HCT116 (cell line): ENCODE measurements at regions of chr3 and their contacts with region 1.

Region 1: DNA sequence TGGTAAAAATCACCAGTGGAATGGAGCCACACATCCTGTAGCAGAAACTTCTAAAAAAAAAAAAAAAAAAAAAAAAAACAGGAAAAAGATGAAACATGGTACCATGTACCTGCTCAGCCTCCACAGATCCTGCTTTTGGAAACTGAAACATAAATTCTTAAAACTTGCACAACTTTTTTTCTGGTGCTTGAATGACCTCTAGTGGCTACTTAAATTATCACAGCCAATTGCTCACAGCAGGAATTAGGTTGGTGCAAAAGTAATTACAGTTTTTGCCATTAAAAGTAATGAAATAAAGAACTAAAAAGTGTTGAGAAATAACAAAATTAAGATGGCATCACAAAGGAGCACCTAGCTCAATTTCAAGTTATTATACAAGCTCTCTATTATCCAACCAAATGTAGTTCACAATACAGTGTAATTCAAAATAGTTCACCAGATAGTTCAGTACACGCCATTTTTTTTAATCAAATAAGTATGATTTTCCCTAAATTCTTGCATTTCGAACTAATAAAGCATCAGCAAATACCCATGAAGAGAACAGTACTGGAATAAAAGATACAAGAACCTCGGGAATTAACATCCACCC is 80.6 kb downstream of the ULK4 start:
- DNase-seq: no peak
- ATAC-seq: no peak
- H3K4me3 ChIP-seq: no peak overlapping the region
- H3K27ac ChIP-seq: no peak overlapping the region
- H3K4me1 ChIP-seq: no peaks in the 10 kb centered on the region
- H3K27me3 ChIP-seq: no peaks in the 10 kb centered on the region
- CTCF ChIP-seq: peak; percentile 51 to 77 (median 69); a peak in 5 of 6 replicates
- POLR2A ChIP-seq: no peak
- RAD21 ChIP-seq: peak; percentile 85

Region 2: DNA sequence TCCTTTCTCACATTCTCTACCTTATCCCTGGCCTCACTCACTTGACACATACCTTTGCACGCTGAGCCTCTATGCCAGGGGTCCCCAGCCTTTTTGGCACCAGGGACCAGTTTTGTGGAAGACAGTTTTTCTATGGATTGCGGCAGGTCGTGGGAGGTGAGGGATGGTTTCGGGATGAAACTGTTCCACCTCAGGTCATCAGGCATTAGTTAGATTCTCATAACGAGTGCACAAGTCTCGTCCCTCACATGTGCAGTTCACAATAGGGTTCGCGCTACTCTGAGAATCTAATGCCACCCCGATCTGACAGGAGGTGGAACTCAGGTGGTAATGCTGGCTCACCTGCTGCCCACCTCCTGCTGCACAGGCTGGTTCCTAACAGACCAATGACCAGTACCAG is 1684.4 kb before region 1 on chr3:
- CTCF ChIA-PET with region 1: no interaction called
- POLR2A ChIA-PET with region 1: no interaction called
- RAD21 ChIA-PET with region 1: no interaction called
- intact Hi-C with region 1: loop called (anchors 5 kb)
- DNase-seq: no peak
- ATAC-seq: no peak
- H3K4me3 ChIP-seq: no peak overlapping the region
- H3K27ac ChIP-seq: no peak overlapping the region
- H3K4me1 ChIP-seq: peaks cover 0 to 5% of the 10 kb centered on the region in 2 experiments; a peak in 1 of 4 replicates
- H3K27me3 ChIP-seq: 0 out of 2 replicates have a peak, but pooled peaks cover 15% of the 10 kb centered on the region
- CTCF ChIP-seq: no peak
- POLR2A ChIP-seq: no peak
- RAD21 ChIP-seq: no peak

Region 3: GRCh38 chr3:41450416-41451231 is 430.7 kb before region 1 on chr3:
- CTCF ChIA-PET with region 1: no interaction called
- POLR2A ChIA-PET with region 1: no interaction called
- RAD21 ChIA-PET with region 1: no interaction called
- intact Hi-C with region 1: loop called (anchors 5 kb)
- DNase-seq: no peak
- ATAC-seq: peak; percentile 67
- H3K4me3 ChIP-seq: no peak overlapping the region
- H3K27ac ChIP-seq: no peak overlapping the region
- H3K4me1 ChIP-seq: no peaks in the 10 kb centered on the region
- H3K27me3 ChIP-seq: no peaks in the 10 kb centered on the region
- CTCF ChIP-seq: peak in 2 of 3 experiments; percentile 16 to 17; a peak in 1 of 6 replicates
- POLR2A ChIP-seq: no peak
- RAD21 ChIP-seq: peak; percentile 26; the same call in 1 of the 2 replicates

Region 4: DNA sequence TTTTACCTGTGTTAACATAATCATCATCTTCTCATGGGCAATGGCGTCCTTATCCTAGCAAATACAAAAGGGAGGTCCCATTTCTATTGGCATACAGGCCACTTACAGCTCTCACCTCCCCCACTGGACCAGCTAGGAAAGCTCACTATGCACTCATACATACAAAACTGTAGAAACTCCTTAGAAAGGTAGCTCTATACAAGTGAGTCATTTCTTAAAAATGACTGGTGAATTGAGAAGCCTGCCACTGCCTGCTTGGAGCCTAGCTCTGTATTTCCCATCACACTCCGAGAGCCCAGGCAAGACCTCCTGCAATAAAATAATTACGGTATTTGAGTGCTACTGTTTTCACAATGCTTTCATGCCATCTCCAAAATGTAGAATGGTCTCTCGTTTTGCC is 241.3 kb before region 1 on chr3:
- CTCF ChIA-PET with region 1: no interaction called
- POLR2A ChIA-PET with region 1: no interaction called
- RAD21 ChIA-PET with region 1: no interaction called
- intact Hi-C with region 1: no loop called
- DNase-seq: no peak
- ATAC-seq: no peak
- H3K4me3 ChIP-seq: no peak overlapping the region
- H3K27ac ChIP-seq: no peak overlapping the region
- H3K4me1 ChIP-seq: no peaks in the 10 kb centered on the region
- H3K27me3 ChIP-seq: no peaks in the 10 kb centered on the region
- CTCF ChIP-seq: no peak
- POLR2A ChIP-seq: no peak
- RAD21 ChIP-seq: no peak

Region 5: DNA sequence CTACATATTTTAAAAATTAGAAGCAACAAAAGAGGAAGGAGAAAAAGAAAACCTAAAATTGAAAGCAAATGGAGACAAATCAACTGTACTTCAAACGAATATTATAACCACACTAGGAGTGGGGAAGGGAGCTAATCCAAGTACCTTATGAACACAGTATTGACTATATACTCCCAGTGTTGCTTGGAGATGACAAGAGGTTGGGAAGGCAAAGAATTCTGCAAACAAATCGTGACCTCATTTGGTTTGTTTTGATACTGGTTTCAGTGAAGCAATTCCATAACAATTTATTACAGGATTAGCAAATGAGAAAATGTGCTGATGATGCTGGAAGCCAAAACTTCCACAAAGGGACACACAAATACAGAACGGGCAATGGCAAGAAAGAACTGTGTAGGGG is 187.5 kb before region 1 on chr3:
- CTCF ChIA-PET with region 1: interaction called, 3 read pairs
- POLR2A ChIA-PET with region 1: no interaction called
- RAD21 ChIA-PET with region 1: no interaction called
- intact Hi-C with region 1: loop called (anchors 2 kb)
- DNase-seq: no peak
- ATAC-seq: no peak
- H3K4me3 ChIP-seq: no peak overlapping the region
- H3K27ac ChIP-seq: no peak overlapping the region
- H3K4me1 ChIP-seq: 0 out of 4 replicates have a peak, but pooled peaks cover 0 to 2% of the 10 kb centered on the region in 2 experiments
- H3K27me3 ChIP-seq: no peaks in the 10 kb centered on the region
- CTCF ChIP-seq: no peak
- POLR2A ChIP-seq: no peak
- RAD21 ChIP-seq: no peak

Region 6: DNA sequence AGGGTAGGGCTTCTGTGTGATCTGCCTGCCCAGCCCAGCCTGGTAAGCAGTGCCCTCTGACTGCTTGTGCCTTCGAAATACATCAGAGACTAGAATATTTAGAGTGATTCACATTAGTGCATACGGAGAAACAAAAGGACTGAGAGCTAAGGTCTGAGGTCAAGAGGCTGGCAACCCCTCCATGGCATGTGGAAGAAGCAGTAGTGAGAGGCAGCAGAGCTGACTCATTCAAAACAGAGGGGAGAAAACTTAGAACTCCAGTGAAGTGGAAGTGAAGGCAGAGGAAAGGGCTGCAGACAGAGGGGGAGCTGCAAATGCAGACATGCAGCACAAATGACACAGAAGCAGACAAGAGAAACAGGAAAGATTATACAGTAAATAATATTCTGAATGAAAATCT is 18.9 kb after region 1 on chr3:
- CTCF ChIA-PET with region 1: no interaction called
- POLR2A ChIA-PET with region 1: no interaction called
- RAD21 ChIA-PET with region 1: no interaction called
- intact Hi-C with region 1: no loop called
- DNase-seq: no peak
- ATAC-seq: no peak
- H3K4me3 ChIP-seq: no peak overlapping the region
- H3K27ac ChIP-seq: no peak overlapping the region
- H3K4me1 ChIP-seq: no peaks in the 10 kb centered on the region
- H3K27me3 ChIP-seq: no peaks in the 10 kb centered on the region
- CTCF ChIP-seq: no peak
- POLR2A ChIP-seq: no peak
- RAD21 ChIP-seq: no peak